ENCODE measurements at regions of chr3 and their contacts with region 1.

Region 1: GRCh38 chr3:37214076-37214475 is 39.7 kb upstream of the LRRFIP2 start:
- DNase-seq: no peak
- H3K4me3 Mint-ChIP-seq: no peak overlapping the region
- H3K27ac Mint-ChIP-seq: no peak overlapping the region
- H3K4me1 Mint-ChIP-seq: peaks cover 18% of the 10 kb centered on the region
- H3K27me3 Mint-ChIP-seq: no peaks in the 10 kb centered on the region

Region 2: DNA sequence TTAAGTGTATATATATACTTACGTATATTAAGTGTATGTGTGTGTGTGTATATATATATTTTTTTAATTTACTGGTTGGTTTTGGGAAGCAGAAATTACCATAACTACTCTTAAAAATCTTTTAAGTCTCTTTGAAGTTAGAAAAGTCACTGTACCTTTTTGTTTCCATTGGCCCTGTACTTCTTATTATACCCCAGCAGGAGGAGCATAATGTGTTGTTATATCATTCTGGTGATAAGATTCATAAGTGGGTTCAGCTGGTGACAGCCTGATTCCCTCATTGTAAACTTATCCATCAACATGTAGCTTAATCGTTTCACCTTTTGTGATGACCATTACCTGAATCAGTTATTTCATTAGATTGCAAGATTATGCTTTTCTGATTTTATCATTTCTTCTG is 190.0 kb before region 1 on chr3:
- CTCF ChIA-PET with region 1: interaction called, 13 read pairs
- POLR2A ChIA-PET with region 1: no interaction called
- DNase-seq: no peak
- H3K4me3 Mint-ChIP-seq: no peak overlapping the region
- H3K27ac Mint-ChIP-seq: no peak overlapping the region
- H3K4me1 Mint-ChIP-seq: peaks cover 6% of the 10 kb centered on the region
- H3K27me3 Mint-ChIP-seq: no peaks in the 10 kb centered on the region

Measured in activated CD4-positive, alpha-beta memory T cell treated with anti-CD3 and anti-CD28 coated beads, Interleukin-2, amount 10 ng/mL, durations not matched to agents 7 days and 5 days (primary cell).